Activated T-helper 2 cell treated with anti-CD3 and anti-CD28 coated beads, Interferon-gamma antibody, Interleukin-2, Interleukin-4, amounts not matched to agents 10 μg/mL and 5 μg/mL and 100 μg/mL, durations not matched to agents 14 hours and 24 hours and 36 hours (primary cell): ENCODE measurements at regions of chr5 and their contacts with region 1.

Region 1: GRCh38 chr5:178626484-178627258 is at the start of gene CLK4:
- DNase-seq: peak; percentile 94
- H3K4me3 Mint-ChIP-seq: peak within 1 kb of the TSS; percentile 97
- H3K27ac Mint-ChIP-seq: peak within 1 kb of the TSS; percentile 98
- H3K4me1 Mint-ChIP-seq: peaks cover 19% of the 10 kb centered on the region
- H3K27me3 Mint-ChIP-seq: peaks cover 6% of the 10 kb centered on the region
- total RNA-seq, gene CLK4: 21.9 and 23.6 TPM in 2 replicates

Region 2: GRCh38 chr5:178232124-178232919 is 394.3 kb before region 1 on chr5 and contains the start of gene PHYKPL:
- intact Hi-C with region 1: loop called (anchors 5 kb)
- DNase-seq: peak; percentile 69
- H3K4me3 Mint-ChIP-seq: peak within 1 kb of the TSS; percentile 89
- H3K27ac Mint-ChIP-seq: peak within 1 kb of the TSS; percentile 81
- H3K4me1 Mint-ChIP-seq: peaks cover 38% of the 10 kb centered on the region
- H3K27me3 Mint-ChIP-seq: no peaks in the 10 kb centered on the region
- total RNA-seq, gene PHYKPL: 87.4 and 92.0 TPM in 2 replicates

Region 3: GRCh38 chr5:178612299-178612698 is 14.4 kb before region 1 on chr5:
- intact Hi-C with region 1: no loop called
- DNase-seq: no peak
- H3K4me3 Mint-ChIP-seq: no peak overlapping the region
- H3K27ac Mint-ChIP-seq: no peak overlapping the region
- H3K4me1 Mint-ChIP-seq: peaks cover 9% of the 10 kb centered on the region
- H3K27me3 Mint-ChIP-seq: no peaks in the 10 kb centered on the region

Region 4: DNA sequence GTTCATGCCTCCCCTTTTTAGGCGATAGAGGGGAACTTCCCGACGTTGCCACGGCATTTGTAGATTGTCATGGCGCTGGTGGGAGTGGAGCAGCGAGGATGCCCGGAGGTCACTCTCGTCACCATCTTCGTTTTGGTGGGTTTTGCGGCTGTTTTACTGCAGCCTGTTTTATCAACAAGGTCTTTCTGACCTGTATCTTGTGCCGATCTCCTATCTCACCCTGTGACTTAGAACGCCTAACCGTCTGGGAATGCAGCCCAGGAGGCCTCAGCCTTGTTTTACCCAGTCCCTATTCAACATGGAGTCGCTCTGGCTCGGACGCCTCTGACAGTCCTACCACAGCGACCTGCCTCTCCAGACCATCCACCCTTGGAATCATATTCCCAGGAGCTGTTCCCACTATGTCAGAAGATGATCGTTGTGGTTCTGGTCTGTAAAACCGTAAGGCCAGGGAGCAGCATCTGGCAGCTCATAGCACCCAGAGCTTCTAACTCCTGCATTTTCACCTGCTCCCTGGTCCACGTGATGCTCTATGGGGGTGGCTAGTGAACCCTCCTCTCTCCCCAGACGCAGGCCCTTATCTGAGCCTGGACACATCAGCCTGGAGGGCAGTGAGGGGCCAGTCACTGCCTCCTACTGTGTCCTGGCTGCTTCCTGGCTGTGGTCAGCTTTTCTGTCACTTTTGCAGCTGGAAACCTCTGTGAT is 35.3 kb after region 1 on chr5:
- intact Hi-C with region 1: no loop called
- DNase-seq: no peak
- H3K4me3 Mint-ChIP-seq: no peak overlapping the region
- H3K27ac Mint-ChIP-seq: no peak overlapping the region
- H3K4me1 Mint-ChIP-seq: no peaks in the 10 kb centered on the region
- H3K27me3 Mint-ChIP-seq: no peaks in the 10 kb centered on the region

Region 5: GRCh38 chr5:178732281-178732680 is 105.6 kb after region 1 on chr5:
- intact Hi-C with region 1: loop called (anchors 1 kb)
- DNase-seq: no peak
- H3K4me3 Mint-ChIP-seq: no peak overlapping the region
- H3K27ac Mint-ChIP-seq: no peak overlapping the region
- H3K4me1 Mint-ChIP-seq: peaks cover 4% of the 10 kb centered on the region
- H3K27me3 Mint-ChIP-seq: no peaks in the 10 kb centered on the region

Region 6: GRCh38 chr5:178859625-178860531 is 233.2 kb after region 1 on chr5 and contains the start of gene ZNF354B:
- intact Hi-C with region 1: loop called (anchors 10 kb)
- DNase-seq: peak; percentile 78
- H3K4me3 Mint-ChIP-seq: peak within 1 kb of the TSS; percentile 85
- H3K27ac Mint-ChIP-seq: peak within 1 kb of the TSS; percentile 64
- H3K4me1 Mint-ChIP-seq: peaks cover 18% of the 10 kb centered on the region
- H3K27me3 Mint-ChIP-seq: no peaks in the 10 kb centered on the region
- total RNA-seq, gene ZNF354B: 13.8 and 16.4 TPM in 2 replicates

Region 7: GRCh38 chr5:179023528-179024430 is 397.1 kb after region 1 on chr5 and contains the start of gene ZNF879:
- intact Hi-C with region 1: loop called (anchors 1 kb)
- DNase-seq: peak; percentile 90
- H3K4me3 Mint-ChIP-seq: peak within 1 kb of the TSS; percentile 91
- H3K27ac Mint-ChIP-seq: peak within 1 kb of the TSS; percentile 74
- H3K4me1 Mint-ChIP-seq: peaks cover 5% of the 10 kb centered on the region
- H3K27me3 Mint-ChIP-seq: peaks cover 3% of the 10 kb centered on the region
- total RNA-seq, gene ZNF879: 1.9 and 2.3 TPM in 2 replicates

Region 8: GRCh38 chr5:179550511-179551230 is 924.0 kb after region 1 on chr5 and contains the start of gene RUFY1:
- intact Hi-C with region 1: loop called (anchors 5 kb)
- DNase-seq: peak; percentile 82
- H3K4me3 Mint-ChIP-seq: peak within 1 kb of the TSS; percentile 98
- H3K27ac Mint-ChIP-seq: peak within 1 kb of the TSS; percentile 100
- H3K4me1 Mint-ChIP-seq: peaks cover 22% of the 10 kb centered on the region
- H3K27me3 Mint-ChIP-seq: no peaks in the 10 kb centered on the region
- total RNA-seq, gene RUFY1: 40.2 and 42.0 TPM in 2 replicates